ENCODE measurements at regions of chr5 and their contacts with region 1.

Region 1: DNA sequence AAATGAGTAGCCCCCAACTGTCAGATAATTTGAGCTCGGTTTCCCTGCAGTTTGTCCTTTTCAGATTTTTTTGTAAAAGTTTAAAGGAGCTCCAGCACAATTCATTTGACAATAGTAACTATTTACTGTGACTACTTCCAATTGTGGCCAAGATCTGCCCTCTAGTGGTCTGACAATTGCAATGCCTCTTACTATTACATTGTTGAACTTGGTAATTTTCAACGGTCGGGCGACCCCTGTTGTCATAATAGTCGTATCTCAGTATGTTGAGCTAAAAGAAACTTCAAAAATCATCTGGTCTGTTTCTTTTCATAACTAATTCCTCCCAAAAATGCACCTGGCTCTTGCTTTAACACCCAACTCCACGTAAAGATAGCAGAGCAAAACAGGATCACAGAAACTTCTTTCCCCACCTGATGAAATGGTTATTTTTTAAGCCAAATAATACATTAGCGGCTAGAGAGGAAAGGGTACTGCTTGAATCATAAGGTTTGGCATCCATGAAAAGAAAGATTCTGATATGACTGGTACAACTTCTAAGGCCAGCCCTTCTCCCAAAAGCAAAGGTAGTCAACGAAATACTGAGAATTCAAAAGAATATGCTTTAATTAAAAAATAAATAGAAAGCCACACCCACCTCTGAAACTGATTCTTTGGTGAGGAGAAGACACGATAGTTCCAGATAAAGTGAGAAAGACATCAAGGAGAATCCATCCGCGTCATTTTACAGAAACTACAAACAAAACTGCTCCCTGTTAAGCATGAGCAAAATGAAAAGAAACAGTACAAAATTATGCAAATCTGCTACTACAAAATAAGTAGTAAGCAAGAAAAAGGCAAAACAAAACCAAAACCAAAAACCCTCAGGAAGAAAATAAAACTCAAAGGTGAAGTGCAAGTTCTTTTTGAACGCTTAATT is 76.9 kb upstream of the HTR4 start:
- DNase-seq: peak; percentile 88
- H3K4me3 ChIP-seq: no peak overlapping the region
- H3K27ac ChIP-seq: no peak overlapping the region
- H3K4me1 ChIP-seq: no peaks in the 10 kb centered on the region
- H3K27me3 ChIP-seq: peaks cover 74% of the 10 kb centered on the region
- CTCF ChIP-seq: peak; percentile 97

Region 2: GRCh38 chr5:148179234-148179824 is 551.9 kb before region 1 on chr5:
- CTCF ChIA-PET with region 1: interaction called, 7 read pairs
- POLR2A ChIA-PET with region 1: interaction called, 3 read pairs
- intact Hi-C with region 1: loop called (anchors 1 kb)
- DNase-seq: peak; percentile 58
- H3K4me3 ChIP-seq: no peak overlapping the region
- H3K27ac ChIP-seq: no peak overlapping the region
- H3K4me1 ChIP-seq: no peaks in the 10 kb centered on the region
- H3K27me3 ChIP-seq: peaks cover 32% of the 10 kb centered on the region
- CTCF ChIP-seq: peak; percentile 69

Region 3: GRCh38 chr5:148306446-148306845 is 424.8 kb before region 1 on chr5:
- CTCF ChIA-PET with region 1: no interaction called
- POLR2A ChIA-PET with region 1: no interaction called
- intact Hi-C with region 1: loop called (anchors 10 kb)
- DNase-seq: no peak
- H3K4me3 ChIP-seq: no peak overlapping the region
- H3K27ac ChIP-seq: no peak overlapping the region
- H3K4me1 ChIP-seq: no peaks in the 10 kb centered on the region
- H3K27me3 ChIP-seq: peaks cover 15% of the 10 kb centered on the region
- CTCF ChIP-seq: no peak

Region 4: GRCh38 chr5:148750614-148751013 is 19.4 kb after region 1 on chr5:
- CTCF ChIA-PET with region 1: no interaction called
- POLR2A ChIA-PET with region 1: interaction called, 16 read pairs
- intact Hi-C with region 1: no loop called
- DNase-seq: no peak
- H3K4me3 ChIP-seq: no peak overlapping the region
- H3K27ac ChIP-seq: no peak overlapping the region
- H3K4me1 ChIP-seq: no peaks in the 10 kb centered on the region
- H3K27me3 ChIP-seq: peaks cover 4% of the 10 kb centered on the region
- CTCF ChIP-seq: no peak

Region 5: DNA sequence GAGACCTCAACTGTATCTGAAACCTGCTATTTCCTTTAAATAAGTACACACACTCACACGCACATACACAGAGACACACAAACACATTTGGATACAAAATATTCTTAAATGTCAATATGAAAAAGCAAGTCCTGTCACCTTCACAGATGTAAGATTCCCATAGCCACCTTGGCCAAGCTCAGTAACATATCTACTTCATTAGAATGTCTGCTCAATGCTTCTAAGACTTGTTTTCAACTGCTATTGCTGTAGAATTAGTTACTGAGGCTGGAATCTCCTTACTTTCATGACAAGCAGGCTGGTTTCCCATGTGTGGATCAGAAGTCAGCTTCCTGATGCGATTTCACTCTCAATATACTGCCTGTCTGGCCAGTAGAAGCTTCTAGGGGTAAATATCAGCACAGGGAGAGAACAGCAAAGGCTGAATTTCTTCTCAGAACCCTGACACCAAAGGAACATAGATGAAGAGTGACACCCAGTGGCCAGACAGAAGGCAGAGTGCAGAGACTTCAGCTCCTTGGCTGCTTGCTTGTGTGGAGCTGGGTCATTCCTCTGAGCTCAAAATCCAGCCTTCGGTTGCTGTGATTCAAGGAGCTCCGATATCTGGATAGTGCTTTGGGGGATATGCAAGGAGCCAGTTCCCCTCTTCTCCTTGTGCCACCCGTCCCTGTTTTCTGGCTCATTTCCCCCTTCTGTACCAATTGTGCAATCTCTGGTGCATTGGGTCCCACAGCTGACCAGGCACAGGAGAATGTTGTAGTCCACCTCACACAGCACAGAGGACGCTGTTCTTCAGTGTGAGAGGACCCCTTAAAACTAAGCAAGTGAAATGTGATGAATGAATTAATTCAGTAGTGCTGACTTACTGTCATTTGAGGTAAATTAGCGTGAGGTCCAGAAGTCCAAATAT is 383.5 kb after region 1 on chr5:
- CTCF ChIA-PET with region 1: interaction called, 10 read pairs
- POLR2A ChIA-PET with region 1: no interaction called
- intact Hi-C with region 1: loop called (anchors 1 kb)
- DNase-seq: peak; percentile 77
- H3K4me3 ChIP-seq: no peak overlapping the region
- H3K27ac ChIP-seq: no peak overlapping the region
- H3K4me1 ChIP-seq: no peaks in the 10 kb centered on the region
- H3K27me3 ChIP-seq: peaks cover 34% of the 10 kb centered on the region
- CTCF ChIP-seq: peak; percentile 68

Measured in A673 (cell line).